Panc1 (cell line): ENCODE measurements at regions of chr19 and their contacts with region 1.

Region 1: DNA sequence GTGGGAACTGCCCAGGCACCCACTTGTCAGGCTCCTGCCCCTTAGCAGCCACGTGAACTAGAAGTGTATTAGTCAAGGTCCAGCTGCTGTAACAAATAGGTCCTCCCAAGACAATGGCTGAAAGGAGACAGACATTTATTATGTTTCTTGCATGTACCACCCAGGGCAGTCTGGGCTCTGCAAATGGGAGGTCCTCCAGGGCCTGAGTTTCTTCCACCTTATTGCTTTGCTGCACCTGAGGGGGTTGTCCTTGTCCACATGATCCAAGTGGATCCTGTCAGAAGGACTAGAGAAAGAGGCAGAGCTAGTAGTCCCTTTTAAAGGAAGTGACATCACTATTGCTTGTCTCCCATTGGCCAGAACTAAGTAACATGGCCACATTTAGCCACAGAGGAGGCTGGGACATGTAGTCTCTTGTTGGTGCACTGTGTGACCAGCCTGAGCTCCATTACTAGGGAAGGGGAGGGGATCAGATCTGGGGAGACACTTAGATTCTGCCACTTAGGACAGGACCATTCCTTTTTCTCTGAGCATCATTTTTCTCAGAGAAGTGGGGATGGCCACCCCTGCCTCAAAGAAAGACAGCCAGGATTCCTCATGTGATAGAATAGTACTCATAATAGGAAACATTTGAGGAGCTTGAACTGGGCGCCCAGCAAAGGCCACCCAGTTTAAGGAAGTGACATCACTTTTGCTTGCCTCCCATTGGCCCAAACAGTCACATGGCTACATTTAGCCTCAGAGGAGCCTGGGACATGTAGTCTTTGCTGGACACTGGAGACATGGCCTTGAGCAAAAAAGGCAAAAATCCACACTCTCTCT is 15.2 kb downstream of the CC2D1A start:
- DNase-seq: no peak
- ATAC-seq: peak; percentile 90
- H3K4me3 ChIP-seq: no peak overlapping the region
- H3K27ac ChIP-seq: no peak overlapping the region
- H3K4me1 ChIP-seq: no peaks in the 10 kb centered on the region
- H3K27me3 ChIP-seq: no peaks in the 10 kb centered on the region
- CTCF ChIP-seq: no peak

Region 2: GRCh38 chr19:13665125-13665905 is 255.8 kb before region 1 on chr19:
- CTCF ChIA-PET with region 1: interaction called, 11 read pairs
- POLR2A ChIA-PET with region 1: no interaction called
- in situ Hi-C with region 1: no loop called
- intact Hi-C with region 1: no loop called
- DNase-seq: no peak
- ATAC-seq: no peak
- H3K4me3 ChIP-seq: no peak overlapping the region
- H3K27ac ChIP-seq: no peak overlapping the region
- H3K4me1 ChIP-seq: no peaks in the 10 kb centered on the region
- H3K27me3 ChIP-seq: no peaks in the 10 kb centered on the region
- CTCF ChIP-seq: no peak

Region 3: DNA sequence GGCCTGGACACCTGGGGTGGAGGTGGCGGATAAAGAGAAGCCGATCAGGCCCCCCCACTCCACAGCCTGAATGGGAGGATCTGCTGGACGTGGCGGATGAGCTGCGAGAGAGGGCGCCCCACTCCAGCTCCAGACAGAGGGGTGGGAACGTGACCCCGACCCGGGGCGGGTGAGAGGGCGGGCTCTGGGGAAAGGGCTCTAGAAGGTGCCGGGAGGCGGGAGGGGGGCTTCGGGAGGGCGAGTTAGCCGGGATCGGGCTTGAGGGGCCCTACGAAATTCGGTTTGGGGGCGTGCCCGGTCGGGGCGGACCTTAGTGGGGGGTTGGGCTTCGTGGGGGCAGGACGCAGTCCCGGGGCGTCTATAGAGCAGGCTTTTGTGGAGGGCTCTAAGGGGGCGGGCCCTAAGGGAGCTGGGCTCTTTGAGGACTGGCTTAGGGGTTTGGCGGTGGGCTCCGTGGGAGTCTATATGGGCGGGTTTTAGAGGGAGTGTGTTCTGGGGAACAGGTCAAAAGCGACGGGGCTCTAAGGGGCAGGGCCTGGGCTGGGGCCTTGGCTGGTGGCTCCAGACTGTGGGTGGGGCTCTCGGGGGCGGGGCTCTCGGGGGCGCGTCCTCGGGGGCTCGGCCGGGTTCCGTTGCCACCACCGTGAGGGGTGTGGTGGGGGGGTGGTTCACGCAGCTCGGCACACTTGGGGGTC is 48.3 kb before region 1 on chr19:
- CTCF ChIA-PET with region 1: no interaction called
- POLR2A ChIA-PET with region 1: no interaction called
- in situ Hi-C with region 1: no loop called
- intact Hi-C with region 1: no loop called
- DNase-seq: no peak
- ATAC-seq: peak; percentile 84
- H3K4me3 ChIP-seq: peak overlapping the region; percentile 38 to 57
- H3K27ac ChIP-seq: no peak overlapping the region
- H3K4me1 ChIP-seq: peaks cover 17% of the 10 kb centered on the region
- H3K27me3 ChIP-seq: no peaks in the 10 kb centered on the region
- CTCF ChIP-seq: peak; percentile 75